GM12878 (cell line): ENCODE measurements at regions of chr6 and their contacts with region 1.

Region 1: DNA sequence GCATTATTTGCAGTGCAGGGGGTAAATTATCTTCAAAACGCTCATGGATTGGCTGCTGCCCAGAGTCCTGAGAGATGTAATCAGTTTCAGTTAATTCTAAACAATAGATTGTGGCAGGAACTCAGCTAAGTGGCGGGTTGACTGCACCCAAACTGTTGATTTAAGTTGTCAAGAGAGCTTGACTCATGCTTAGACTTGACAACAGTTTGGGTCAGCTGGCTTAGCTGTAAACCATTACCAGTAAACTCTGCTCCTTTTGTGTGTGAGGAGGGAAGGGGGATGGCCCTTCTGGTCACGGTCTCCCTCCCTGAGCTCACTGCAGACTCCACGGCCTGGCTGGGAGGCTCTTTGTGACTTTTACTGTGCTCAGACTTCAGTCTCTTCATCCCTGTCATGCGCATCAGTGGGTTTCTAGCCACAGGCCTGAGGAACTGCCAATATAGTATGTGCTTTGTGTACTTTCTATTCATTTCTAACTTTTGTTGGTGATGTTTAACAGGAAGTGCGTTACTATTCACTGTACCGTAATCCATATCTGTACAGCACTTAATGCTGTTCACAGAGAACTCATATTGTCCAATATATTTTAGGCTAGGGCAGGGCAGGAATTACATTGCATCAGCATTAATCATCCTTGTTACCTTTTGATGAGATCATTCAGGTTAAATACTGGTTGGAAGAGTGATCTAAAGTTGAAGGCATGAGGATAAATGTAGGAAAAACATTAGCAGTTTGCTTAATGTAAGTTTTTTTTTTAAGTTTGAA is 488.3 kb downstream of the CDKAL1 start:
- DNase-seq: peak; percentile 90
- ATAC-seq: peak; percentile 97
- H3K4me3 ChIP-seq: no peak overlapping the region; the same call in 1 of the 2 replicates
- H3K27ac ChIP-seq: peak overlapping the region; percentile 83
- H3K4me1 ChIP-seq: peaks cover 3% of the 10 kb centered on the region; the same call in 1 of the 2 replicates
- H3K27me3 ChIP-seq: no peaks in the 10 kb centered on the region
- CTCF ChIP-seq: no peak
- EP300 ChIP-seq: peak; percentile 87 to 89
- POLR2A ChIP-seq: peak; percentile 49
- RAD21 ChIP-seq: no peak; the same call in 1 of the 2 replicates

Region 2: GRCh38 chr6:20997143-20997769 is 25.3 kb before region 1 on chr6:
- CTCF ChIA-PET with region 1: no interaction called
- POLR2A ChIA-PET with region 1: interaction called, 5 read pairs
- RAD21 ChIA-PET with region 1: interaction called, 40 read pairs
- SMC1A ChIA-PET with region 1: interaction called, 63 read pairs
- in situ Hi-C with region 1: no loop called
- intact Hi-C with region 1: no loop called
- DNase-seq: no peak
- ATAC-seq: peak; percentile 73
- H3K4me3 ChIP-seq: no peak overlapping the region
- H3K27ac ChIP-seq: peak overlapping the region; percentile 24; the same call in 1 of the 2 replicates
- H3K4me1 ChIP-seq: peaks cover 9% of the 10 kb centered on the region
- H3K27me3 ChIP-seq: no peaks in the 10 kb centered on the region
- CTCF ChIP-seq: no peak
- EP300 ChIP-seq: no peak
- POLR2A ChIP-seq: no peak
- RAD21 ChIP-seq: no peak

Region 3: GRCh38 chr6:21033575-21034026 is 11.1 kb after region 1 on chr6:
- CTCF ChIA-PET with region 1: interaction called, 6 read pairs
- POLR2A ChIA-PET with region 1: interaction called, 5 read pairs
- RAD21 ChIA-PET with region 1: interaction called, 36 read pairs
- SMC1A ChIA-PET with region 1: interaction called, 26 read pairs
- in situ Hi-C with region 1: no loop called
- intact Hi-C with region 1: no loop called
- DNase-seq: no peak
- ATAC-seq: no peak
- H3K4me3 ChIP-seq: no peak overlapping the region
- H3K27ac ChIP-seq: no peak overlapping the region
- H3K4me1 ChIP-seq: peaks cover 4% of the 10 kb centered on the region; the same call in 1 of the 2 replicates
- H3K27me3 ChIP-seq: no peaks in the 10 kb centered on the region
- CTCF ChIP-seq: no peak
- EP300 ChIP-seq: no peak
- POLR2A ChIP-seq: no peak
- RAD21 ChIP-seq: no peak

Region 4: GRCh38 chr6:21213492-21213891 is 191.0 kb after region 1 on chr6:
- CTCF ChIA-PET with region 1: interaction called, 3 read pairs
- POLR2A ChIA-PET with region 1: interaction called, 5 read pairs
- RAD21 ChIA-PET with region 1: interaction called, 8 read pairs
- SMC1A ChIA-PET with region 1: interaction called, 5 read pairs
- in situ Hi-C with region 1: no loop called
- intact Hi-C with region 1: loop called (anchors 1 kb)
- DNase-seq: peak; percentile 84
- ATAC-seq: peak; percentile 77
- H3K4me3 ChIP-seq: 0 out of 2 replicates have a peak overlapping the region, but pooled peaks have one; percentile 47
- H3K27ac ChIP-seq: peak overlapping the region; percentile 74
- H3K4me1 ChIP-seq: peaks cover 42% of the 10 kb centered on the region
- H3K27me3 ChIP-seq: no peaks in the 10 kb centered on the region
- CTCF ChIP-seq: no peak
- EP300 ChIP-seq: peak; percentile 67 to 69; a peak in 2 of 4 replicates
- POLR2A ChIP-seq: no peak
- RAD21 ChIP-seq: no peak

Region 5: DNA sequence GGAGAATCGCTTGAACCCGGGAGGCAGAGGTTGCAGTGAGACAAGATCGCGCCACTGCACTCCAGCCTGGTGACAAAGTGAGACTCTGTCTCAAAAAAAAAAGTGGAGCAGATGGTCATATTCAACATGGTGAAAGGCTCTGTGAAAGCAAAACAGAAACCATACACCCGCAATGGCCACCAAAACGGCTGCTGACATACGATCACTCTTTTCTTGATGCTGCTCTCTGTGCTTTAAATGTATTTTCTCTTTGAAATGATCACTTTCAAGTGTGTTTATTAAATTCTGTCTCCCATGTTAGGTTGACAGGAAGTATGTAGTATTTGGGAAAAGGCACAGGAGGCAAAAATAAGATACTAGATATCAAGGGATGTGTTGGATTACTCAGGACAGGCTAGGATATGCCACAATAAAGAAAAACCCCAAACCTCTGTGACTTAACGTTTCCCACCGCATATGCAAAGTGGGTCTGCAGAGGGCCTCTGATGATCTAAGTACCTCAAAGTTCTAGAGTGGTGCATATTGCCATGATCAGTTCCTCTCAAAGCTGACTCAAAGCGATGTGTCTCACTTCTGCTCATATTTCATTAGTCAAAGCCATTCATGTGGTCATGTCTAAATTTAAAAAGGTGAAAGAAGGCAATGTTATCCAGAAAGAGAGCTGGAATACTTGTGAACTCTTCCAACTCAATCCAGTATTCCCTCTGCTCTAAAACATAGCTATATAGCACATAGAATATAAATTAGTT is 415.9 kb after region 1 on chr6:
- CTCF ChIA-PET with region 1: no interaction called
- POLR2A ChIA-PET with region 1: no interaction called
- RAD21 ChIA-PET with region 1: interaction called, 6 read pairs
- SMC1A ChIA-PET with region 1: no interaction called
- in situ Hi-C with region 1: no loop called
- intact Hi-C with region 1: loop called (anchors 5 kb)
- DNase-seq: peak; percentile 97
- ATAC-seq: peak; percentile 97
- H3K4me3 ChIP-seq: peak overlapping the region; percentile 60; the same call in 1 of the 2 replicates
- H3K27ac ChIP-seq: peak overlapping the region; percentile 89
- H3K4me1 ChIP-seq: peaks cover 17% of the 10 kb centered on the region
- H3K27me3 ChIP-seq: no peaks in the 10 kb centered on the region
- CTCF ChIP-seq: no peak
- EP300 ChIP-seq: peak; percentile 93 to 99
- POLR2A ChIP-seq: no peak
- RAD21 ChIP-seq: no peak